Activated CD8-positive, alpha-beta T cell treated with anti-CD3 and anti-CD28 coated beads, Interleukin-2, amount 10 ng/mL, durations not matched to agents 7 days and 5 days (primary cell): ENCODE measurements at regions of chr3 and their contacts with region 1.

Region 1: DNA sequence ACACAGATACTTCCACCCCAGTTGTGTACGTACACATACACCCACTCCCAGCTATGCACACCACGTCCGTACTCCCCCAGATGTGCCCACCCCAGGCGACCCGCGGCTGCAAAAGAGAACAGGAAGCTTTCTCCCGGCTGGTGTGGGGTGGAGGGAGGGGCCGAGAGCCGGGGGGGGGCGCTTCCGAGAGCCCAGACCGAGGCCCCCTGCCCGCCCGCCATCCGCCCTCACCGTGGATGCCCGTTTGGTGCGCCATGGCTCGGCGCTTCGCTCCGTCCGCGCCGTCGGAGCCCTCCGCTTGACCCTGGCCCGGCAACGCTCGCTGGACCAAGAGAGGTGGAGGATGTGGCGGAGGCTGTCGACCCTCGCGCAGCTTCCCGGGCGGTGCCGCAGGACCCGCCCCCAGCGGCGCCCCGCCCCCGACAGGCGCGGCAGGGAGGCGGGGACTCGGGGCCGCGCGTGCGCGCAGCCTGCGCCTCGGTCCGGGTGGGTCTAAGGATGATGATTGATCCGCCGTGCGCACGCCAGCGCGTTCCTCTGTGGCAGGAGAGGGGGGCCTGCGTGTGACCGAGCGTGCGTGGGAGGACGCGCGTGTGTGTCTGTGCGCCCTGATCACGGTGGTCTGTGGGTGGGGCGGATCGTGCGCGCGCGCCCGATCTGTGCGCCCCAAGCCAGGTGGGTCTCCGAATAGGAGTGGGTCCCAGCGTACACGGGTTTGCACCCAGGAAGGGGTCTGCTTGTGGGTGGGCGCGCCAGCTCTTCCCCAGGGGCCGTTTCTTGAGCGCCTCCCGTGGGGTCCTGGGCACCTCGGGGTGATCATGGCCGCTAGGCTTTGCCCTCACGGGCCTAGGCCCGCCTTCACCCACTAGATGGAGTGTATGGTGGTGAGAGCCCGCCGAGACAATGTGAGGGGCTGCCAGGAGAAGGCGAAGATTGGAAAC is at the start of gene TWF2:
- DNase-seq: peak; percentile 85
- ATAC-seq: peak; percentile 83
- H3K4me3 Mint-ChIP-seq: peak within 1 kb of the TSS; percentile 96
- H3K27ac Mint-ChIP-seq: peak within 1 kb of the TSS; percentile 96
- H3K4me1 Mint-ChIP-seq: peaks cover 73% of the 10 kb centered on the region
- H3K27me3 Mint-ChIP-seq: no peaks in the 10 kb centered on the region
- total RNA-seq, gene TWF2: 154 to 162 TPM

Region 2: GRCh38 chr3:52225452-52226228 is 13.4 kb before region 1 on chr3 and contains the start of gene TLR9:
- CTCF ChIA-PET with region 1: interaction called, 176 read pairs
- POLR2A ChIA-PET with region 1: interaction called, 32 read pairs
- DNase-seq: no peak
- ATAC-seq: peak; percentile 29
- H3K4me3 Mint-ChIP-seq: peak within 1 kb of the TSS; percentile 41
- H3K27ac Mint-ChIP-seq: peak within 1 kb of the TSS; percentile 96
- H3K4me1 Mint-ChIP-seq: peaks cover 69% of the 10 kb centered on the region
- H3K27me3 Mint-ChIP-seq: no peaks in the 10 kb centered on the region
- total RNA-seq, gene TLR9: 0.52 to 0.79 TPM

Region 3: DNA sequence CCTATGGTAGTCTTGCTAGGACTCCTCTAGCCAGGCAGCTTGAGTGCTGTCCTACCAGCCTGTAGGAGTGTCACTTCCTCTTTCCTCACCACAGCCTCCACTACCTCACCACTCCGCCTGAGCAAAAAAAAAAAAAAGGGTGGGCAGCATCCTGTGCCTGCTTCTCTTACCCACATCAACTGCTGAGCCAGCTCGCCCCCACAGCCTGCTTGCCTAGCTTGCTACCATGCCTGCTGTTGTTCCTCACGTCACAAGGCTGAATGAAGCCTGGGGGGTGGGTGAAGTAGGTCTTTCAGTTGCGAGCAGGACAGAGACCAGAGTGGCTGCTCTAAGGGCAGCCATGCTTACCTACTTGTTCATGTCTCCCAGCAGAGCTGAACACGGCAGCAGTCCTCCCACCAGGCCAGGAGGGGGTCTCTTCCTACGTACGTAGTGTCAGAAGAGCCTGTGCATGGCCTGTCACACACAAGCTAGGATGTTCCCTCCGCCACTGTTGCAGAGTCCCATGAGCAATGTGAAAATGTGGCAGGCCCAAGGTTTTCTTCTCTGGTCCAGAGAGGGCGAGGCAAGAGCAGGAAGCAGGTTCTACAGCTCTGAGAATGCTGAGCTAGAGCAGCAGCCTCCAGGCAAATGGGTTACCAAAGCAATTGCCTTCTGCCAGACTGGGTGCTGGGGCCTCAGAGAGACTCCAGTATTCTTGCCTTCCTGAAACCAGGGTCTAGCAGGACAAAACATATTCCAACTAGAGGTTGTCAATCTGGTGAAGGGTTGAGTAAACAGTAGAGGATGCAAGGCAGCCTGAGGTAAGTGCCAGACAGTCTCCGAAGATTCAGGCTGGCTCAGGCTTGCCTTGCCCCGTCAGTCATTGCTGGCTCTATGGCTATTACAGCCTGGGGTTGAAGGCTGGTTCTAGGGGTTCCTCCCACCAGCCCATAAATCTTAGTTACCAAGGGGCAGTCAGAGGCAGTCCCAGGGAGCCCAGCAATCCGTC is 14.6 kb after region 1 on chr3:
- CTCF ChIA-PET with region 1: interaction called, 13 read pairs
- POLR2A ChIA-PET with region 1: interaction called, 32 read pairs
- DNase-seq: peak; percentile 90
- ATAC-seq: peak; percentile 88
- H3K4me3 Mint-ChIP-seq: peak overlapping the region; percentile 77
- H3K27ac Mint-ChIP-seq: peak overlapping the region; percentile 99
- H3K4me1 Mint-ChIP-seq: peaks cover 95% of the 10 kb centered on the region
- H3K27me3 Mint-ChIP-seq: no peaks in the 10 kb centered on the region

Region 4: GRCh38 chr3:52270252-52270754 is 31.3 kb after region 1 on chr3:
- CTCF ChIA-PET with region 1: interaction called, 13 read pairs
- POLR2A ChIA-PET with region 1: interaction called, 400 read pairs
- DNase-seq: no peak
- ATAC-seq: no peak
- H3K4me3 Mint-ChIP-seq: peak overlapping the region; percentile 84
- H3K27ac Mint-ChIP-seq: peak overlapping the region; percentile 96
- H3K4me1 Mint-ChIP-seq: peaks cover 84% of the 10 kb centered on the region
- H3K27me3 Mint-ChIP-seq: no peaks in the 10 kb centered on the region

Region 5: DNA sequence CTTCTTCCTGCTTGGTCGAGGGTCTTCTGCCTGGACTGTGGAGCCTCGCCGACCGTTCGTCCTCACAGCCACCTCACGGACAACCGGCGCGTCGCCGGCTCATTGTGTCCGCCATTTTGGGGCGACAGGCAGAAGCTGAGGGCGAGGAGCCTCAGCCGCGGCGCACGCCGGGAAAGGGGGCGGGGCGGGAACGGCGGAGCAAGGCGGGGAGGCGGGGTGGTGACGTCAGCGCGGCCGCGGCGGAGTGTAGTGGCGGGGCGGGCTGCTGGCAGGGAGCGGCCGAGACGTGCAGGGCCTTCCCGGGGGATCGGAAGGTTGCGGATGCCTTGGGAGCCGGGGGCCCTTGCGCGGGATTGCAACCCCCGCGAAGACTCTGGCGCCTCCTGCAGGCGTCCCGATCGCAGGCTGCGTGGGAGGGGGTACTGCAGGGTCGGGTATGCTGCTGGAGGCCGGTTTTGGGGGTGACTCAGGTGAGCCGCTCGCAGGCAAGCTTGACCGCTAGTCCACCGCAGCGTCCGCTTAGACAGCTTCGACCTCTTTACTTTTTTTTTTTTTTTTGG is 39.6 kb after region 1 on chr3 and contains the start of gene WDR82:
- CTCF ChIA-PET with region 1: interaction called, 143 read pairs
- POLR2A ChIA-PET with region 1: interaction called, 400 read pairs
- DNase-seq: peak; percentile 98
- ATAC-seq: peak; percentile 79
- H3K4me3 Mint-ChIP-seq: peak within 1 kb of the TSS; percentile 100
- H3K27ac Mint-ChIP-seq: peak within 1 kb of the TSS; percentile 99
- H3K4me1 Mint-ChIP-seq: peaks cover 56% of the 10 kb centered on the region
- H3K27me3 Mint-ChIP-seq: no peaks in the 10 kb centered on the region
- total RNA-seq, gene WDR82: 131 TPM

Region 6: GRCh38 chr3:52291508-52292181 is 52.6 kb after region 1 on chr3:
- CTCF ChIA-PET with region 1: interaction called, 12 read pairs
- POLR2A ChIA-PET with region 1: interaction called, 400 read pairs
- DNase-seq: peak; percentile 70
- ATAC-seq: peak; percentile 23
- H3K4me3 Mint-ChIP-seq: no peak overlapping the region
- H3K27ac Mint-ChIP-seq: peak overlapping the region; percentile 78
- H3K4me1 Mint-ChIP-seq: peaks cover 34% of the 10 kb centered on the region
- H3K27me3 Mint-ChIP-seq: no peaks in the 10 kb centered on the region